Lower lobe of right lung (tissue), 2 donors: ENCODE measurements at regions of chr1 and their contacts with region 1.

Region 1: GRCh38 chr1:184563308-184563707 is 176.5 kb downstream of the C1orf21 start:
- DNase-seq: no peak
- ATAC-seq: no peak
- H3K4me3 ChIP-seq: no peak overlapping the region
- H3K27ac ChIP-seq: no peak overlapping the region
- H3K4me1 ChIP-seq: peaks cover 17% of the 10 kb centered on the region
- H3K27me3 ChIP-seq: no peaks in the 10 kb centered on the region
- CTCF ChIP-seq: peak; percentile 62

Region 2: GRCh38 chr1:184483101-184483683 is 80.1 kb before region 1 on chr1:
- intact Hi-C with region 1: loop called (anchors 10 kb)
- DNase-seq: peak; percentile 67
- ATAC-seq: peak; percentile 85 to 92
- H3K4me3 ChIP-seq: no peak overlapping the region
- H3K27ac ChIP-seq: peak overlapping the region; percentile 69
- H3K4me1 ChIP-seq: peaks cover 61% of the 10 kb centered on the region
- H3K27me3 ChIP-seq: no peaks in the 10 kb centered on the region
- CTCF ChIP-seq: peak; percentile 30